ENCODE measurements at regions of chr12 and their contacts with region 1.

Region 1: DNA sequence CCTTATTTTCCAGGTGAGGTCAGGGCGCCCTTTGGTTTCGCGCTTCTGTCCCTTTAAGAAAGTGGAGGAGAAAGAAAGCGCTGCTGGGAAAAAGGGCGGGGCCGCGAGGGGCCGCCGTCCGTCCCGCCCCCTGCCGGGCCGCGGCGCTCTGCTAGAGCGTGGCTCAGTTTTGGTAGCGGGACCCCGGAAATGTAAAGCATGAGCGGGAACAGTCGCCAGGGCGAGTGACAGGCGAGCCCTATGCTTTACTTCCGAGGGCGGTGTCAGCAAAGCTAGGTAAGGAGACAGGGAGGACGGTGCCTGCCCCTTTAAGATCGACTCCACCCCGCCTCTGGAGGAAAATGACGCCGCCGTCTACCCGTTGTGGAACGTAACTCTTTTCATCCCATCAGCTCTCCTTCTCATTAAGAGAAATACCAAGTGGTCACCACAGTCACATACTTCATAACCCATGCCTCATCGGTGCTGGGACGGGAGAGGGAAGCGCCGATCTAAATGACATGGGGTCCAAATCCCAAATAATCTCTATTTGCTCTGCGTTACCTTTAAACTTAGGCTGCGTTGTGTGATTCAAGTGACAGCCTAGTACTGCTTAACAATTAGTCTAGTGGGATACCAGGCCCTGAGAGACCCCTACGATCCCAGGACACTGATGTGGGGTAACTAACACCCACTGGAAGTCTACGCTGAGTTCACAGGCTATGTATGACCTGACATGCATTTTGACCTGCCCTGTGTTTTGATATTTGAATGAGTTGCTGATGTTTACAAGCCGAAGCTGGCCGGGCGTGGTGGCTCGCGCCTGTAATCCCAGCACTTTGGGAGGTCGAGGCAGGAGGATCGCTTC is at the start of gene ETFBKMT:
- DNase-seq: peak; percentile 92
- CTCF ChIP-seq: no peak

Region 2: GRCh38 chr12:31702047-31702446 is 42.7 kb after region 1 on chr12:
- CTCF ChIA-PET with region 1: interaction called, 3 read pairs
- POLR2A ChIA-PET with region 1: interaction called, 11 read pairs
- DNase-seq: no peak
- CTCF ChIP-seq: no peak

Measured in GM10248 (cell line).